Ovary (tissue), 10 donors: ENCODE measurements at regions of chr2 and their contacts with region 1.

Region 1: DNA sequence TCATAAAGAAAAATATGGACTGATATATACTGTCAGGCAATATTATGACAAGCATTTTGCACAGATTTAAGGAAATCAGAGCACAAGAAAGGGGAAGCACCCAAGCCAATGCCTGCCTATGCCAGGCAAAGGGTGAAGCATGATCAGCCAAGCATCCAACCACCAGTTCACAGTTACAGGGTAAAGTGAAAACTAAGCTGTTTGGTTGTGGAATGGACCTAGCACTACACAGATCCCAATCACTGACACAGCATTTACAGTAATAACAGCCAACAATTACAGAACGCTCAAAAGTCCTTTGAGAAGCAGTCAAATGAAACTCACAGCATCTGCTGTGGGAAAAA is 90.3 kb downstream of the SP3 start:
- DNase-seq: no peak
- H3K4me3 ChIP-seq: no peak overlapping the region
- H3K27ac ChIP-seq: no peak overlapping the region
- H3K4me1 ChIP-seq: no peaks in the 10 kb centered on the region
- H3K27me3 ChIP-seq: no peaks in the 10 kb centered on the region
- CTCF ChIP-seq: no peak
- EP300 ChIP-seq: no peak
- POLR2A ChIP-seq: no peak

Region 2: DNA sequence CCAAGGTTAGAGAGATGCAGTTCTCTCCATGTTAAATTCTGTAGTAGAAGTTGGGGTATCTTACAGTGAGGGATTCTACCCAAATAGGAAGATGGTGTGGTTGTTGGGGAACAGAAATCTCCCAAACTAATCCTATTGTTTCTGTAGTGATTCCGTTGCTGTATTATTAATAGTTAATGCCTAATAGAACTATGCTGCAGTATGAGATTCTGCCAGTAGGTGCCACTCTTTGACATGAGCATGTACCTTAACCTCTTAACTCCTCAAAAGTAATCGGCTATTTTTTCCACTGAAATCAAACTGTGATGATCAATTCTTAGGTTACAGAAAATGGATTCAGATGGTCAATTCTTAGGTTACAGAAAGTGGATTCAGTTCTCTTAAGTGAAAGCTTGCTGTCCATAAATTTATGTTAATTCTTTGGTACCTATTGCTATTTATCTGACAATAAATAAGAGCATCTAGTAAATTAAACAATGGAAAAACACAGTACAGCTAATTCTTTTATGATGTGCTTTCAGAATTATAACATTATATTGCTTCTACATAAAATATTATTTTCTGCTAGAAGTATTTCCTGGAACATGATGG is 1674.3 kb before region 1 on chr2:
- intact Hi-C with region 1: no loop called
- DNase-seq: no peak
- H3K4me3 ChIP-seq: no peak overlapping the region
- H3K27ac ChIP-seq: no peak overlapping the region
- H3K4me1 ChIP-seq: no peaks in the 10 kb centered on the region
- H3K27me3 ChIP-seq: no peaks in the 10 kb centered on the region
- CTCF ChIP-seq: no peak
- EP300 ChIP-seq: no peak
- POLR2A ChIP-seq: no peak

Region 3: GRCh38 chr2:173749315-173749714 is 125.6 kb before region 1 on chr2:
- intact Hi-C with region 1: loop called in 1 of 4 experiments (anchors 10 kb)
- DNase-seq: no peak
- H3K4me3 ChIP-seq: no peak overlapping the region
- H3K27ac ChIP-seq: no peak overlapping the region
- H3K4me1 ChIP-seq: no peaks in the 10 kb centered on the region
- H3K27me3 ChIP-seq: no peaks in the 10 kb centered on the region
- CTCF ChIP-seq: no peak
- EP300 ChIP-seq: no peak
- POLR2A ChIP-seq: no peak

Region 4: DNA sequence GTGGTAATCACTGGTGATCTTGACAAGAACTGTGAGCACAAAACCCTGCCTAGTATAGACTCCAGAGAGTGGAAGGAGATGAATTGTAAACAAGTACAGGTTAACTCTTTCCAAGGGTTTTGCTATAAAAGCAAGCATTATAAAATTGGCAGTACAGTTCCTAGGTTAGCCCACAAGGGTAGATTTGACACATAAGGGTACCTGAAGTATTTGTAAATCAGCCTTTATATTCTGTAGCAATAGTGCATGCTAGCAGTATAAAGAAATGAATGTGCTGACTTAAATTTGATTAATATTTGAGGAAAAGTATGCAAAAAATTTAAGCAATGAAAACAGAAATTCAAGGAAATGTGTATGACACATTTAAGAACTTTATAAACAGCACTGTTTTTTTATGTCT is 47.9 kb after region 1 on chr2:
- intact Hi-C with region 1: no loop called
- DNase-seq: no peak
- H3K4me3 ChIP-seq: no peak overlapping the region
- H3K27ac ChIP-seq: no peak overlapping the region
- H3K4me1 ChIP-seq: peaks cover 4% of the 10 kb centered on the region
- H3K27me3 ChIP-seq: no peaks in the 10 kb centered on the region
- CTCF ChIP-seq: no peak
- EP300 ChIP-seq: no peak
- POLR2A ChIP-seq: no peak